ENCODE measurements at regions of chr19 and their contacts with region 1.

Region 1: GRCh38 chr19:45439569-45440254 is 16.0 kb upstream of the ERCC1 start:
- DNase-seq: peak; percentile 65
- H3K4me3 ChIP-seq: peak overlapping the region; percentile 48 to 64 (median 52)
- H3K27ac ChIP-seq: peak overlapping the region; percentile 59
- H3K4me1 ChIP-seq: peaks cover 15% of the 10 kb centered on the region
- H3K27me3 ChIP-seq: no peaks in the 10 kb centered on the region
- CTCF ChIP-seq: peak; percentile 88 to 99
- POLR2A ChIP-seq: no peak

Region 2: GRCh38 chr19:45340232-45340898 is 99.3 kb before region 1 on chr19 and contains the start of gene KLC3:
- CTCF ChIA-PET with region 1: no interaction called
- POLR2A ChIA-PET with region 1: no interaction called
- dilution Hi-C with region 1: no loop called
- intact Hi-C with region 1: no loop called
- DNase-seq: no peak
- H3K4me3 ChIP-seq: no peak within 1 kb of the TSS
- H3K27ac ChIP-seq: no peak within 1 kb of the TSS
- H3K4me1 ChIP-seq: peaks cover 5% of the 10 kb centered on the region
- H3K27me3 ChIP-seq: peaks cover 5% of the 10 kb centered on the region in 2 experiments
- CTCF ChIP-seq: no peak
- POLR2A ChIP-seq: no peak
- total RNA-seq, gene KLC3: not detected in 2 replicates

Region 3: DNA sequence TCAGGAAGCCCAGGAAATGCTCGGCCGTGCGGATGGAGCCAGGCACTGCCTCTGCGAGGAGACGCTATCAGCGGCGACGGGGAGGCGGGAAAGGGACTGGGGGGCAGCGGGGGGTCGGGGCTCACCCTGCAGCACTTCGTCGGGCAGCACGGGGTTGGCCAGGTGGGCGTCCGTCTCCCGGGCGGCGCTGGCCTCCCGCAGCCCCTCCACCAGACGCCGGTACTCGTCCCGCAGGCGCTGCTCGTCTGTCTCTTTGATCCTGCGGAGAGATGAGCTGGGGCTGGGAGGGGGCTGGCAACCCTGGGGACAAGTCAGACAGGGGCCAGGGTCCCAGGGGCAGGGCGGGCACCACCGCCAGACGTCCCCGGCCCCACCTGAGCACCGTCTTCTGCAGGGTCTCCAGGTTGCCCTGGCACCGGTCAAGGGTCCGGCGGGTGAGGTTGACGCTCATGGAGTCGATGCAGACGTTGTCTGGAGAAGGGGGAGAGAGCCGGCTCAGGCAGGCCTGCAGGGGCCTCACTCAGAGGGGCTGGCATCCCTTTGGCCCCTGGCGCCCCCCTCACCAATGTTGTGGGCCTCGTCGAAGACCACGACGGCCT is 75.8 kb before region 1 on chr19:
- CTCF ChIA-PET with region 1: no interaction called
- POLR2A ChIA-PET with region 1: no interaction called
- dilution Hi-C with region 1: no loop called
- intact Hi-C with region 1: no loop called
- DNase-seq: no peak
- H3K4me3 ChIP-seq: no peak overlapping the region
- H3K27ac ChIP-seq: no peak overlapping the region
- H3K4me1 ChIP-seq: peaks cover 1% of the 10 kb centered on the region
- H3K27me3 ChIP-seq: no peaks in the 10 kb centered on the region
- CTCF ChIP-seq: no peak
- POLR2A ChIP-seq: no peak

Region 4: DNA sequence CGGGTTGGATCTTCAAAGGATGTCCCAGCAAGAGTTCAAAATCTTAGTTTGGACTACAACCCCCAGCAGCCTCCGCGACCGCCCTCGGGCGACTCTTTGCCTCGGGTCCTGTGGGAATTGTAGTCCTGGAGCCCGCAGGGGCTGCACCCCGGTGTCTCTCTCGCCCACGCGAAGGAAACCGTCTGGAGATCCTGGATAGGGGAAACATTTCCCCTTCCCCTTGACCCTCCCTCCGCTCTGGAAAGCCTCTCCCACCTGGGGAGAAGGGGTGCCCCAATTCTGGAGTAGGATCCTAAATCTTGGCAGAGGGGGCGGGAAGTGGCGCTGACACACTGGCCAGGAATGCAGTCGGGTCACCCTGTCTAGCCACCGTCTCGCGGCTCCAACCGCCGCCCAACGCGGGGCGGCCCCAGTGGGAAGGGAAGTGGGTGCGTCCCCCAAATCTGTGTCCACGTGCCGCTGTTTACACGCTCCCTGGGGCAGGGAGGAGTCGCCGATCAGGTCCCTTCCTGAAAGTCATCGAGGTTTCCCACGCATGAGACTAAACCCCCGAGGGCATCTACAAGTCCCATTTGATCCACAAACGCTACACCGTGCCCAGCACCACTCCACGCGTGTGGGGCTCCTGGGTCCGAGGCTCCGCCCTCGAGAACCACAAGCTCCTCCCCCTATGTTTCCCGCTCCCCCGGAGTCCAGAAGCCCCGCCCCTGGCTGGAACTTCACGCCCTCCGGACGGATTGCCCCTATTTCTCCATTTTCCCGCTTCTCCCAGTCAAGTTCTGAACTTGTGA is 34.1 kb before region 1 on chr19:
- CTCF ChIA-PET with region 1: interaction called, 61 read pairs
- POLR2A ChIA-PET with region 1: no interaction called
- dilution Hi-C with region 1: no loop called
- intact Hi-C with region 1: no loop called
- DNase-seq: peak; percentile 93
- H3K4me3 ChIP-seq: peak overlapping the region; percentile 73 to 83 (median 81)
- H3K27ac ChIP-seq: peak overlapping the region; percentile 88
- H3K4me1 ChIP-seq: peaks cover 27% of the 10 kb centered on the region
- H3K27me3 ChIP-seq: no peaks in the 10 kb centered on the region
- CTCF ChIP-seq: no peak
- POLR2A ChIP-seq: peak; percentile 43

Region 5: DNA sequence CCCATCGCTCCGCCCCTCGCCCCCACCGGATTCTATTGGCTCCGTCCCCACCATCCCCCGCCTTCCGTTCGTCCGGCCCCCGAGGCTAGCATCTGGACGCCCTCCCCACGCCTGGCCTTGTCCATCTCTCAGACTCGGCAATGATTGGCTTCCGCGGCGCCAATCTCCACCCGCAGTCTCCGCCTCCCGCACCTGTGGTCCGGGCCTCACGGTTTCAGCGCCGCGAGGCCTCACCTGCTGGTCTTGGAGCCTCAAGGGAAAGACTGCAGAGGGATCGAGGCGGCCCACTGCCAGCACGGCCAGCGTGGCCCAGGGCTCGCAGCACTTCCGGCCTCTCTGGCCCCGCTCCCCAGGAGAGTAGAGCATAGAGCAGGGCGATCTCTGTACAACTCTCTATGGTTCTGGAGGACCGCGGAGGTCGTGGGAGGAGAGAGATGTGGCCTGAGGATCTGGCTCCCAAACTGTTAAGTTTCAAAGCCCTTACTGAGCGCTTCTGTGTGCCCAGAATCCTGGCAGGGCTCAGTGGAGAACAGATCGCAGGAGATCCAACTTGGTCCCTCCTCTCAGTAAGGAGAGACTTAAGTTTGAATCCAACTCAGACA is 16.0 kb before region 1 on chr19 and contains the start of gene ERCC1:
- CTCF ChIA-PET with region 1: interaction called, 22 read pairs
- POLR2A ChIA-PET with region 1: no interaction called
- dilution Hi-C with region 1: no loop called
- intact Hi-C with region 1: loop called (anchors 1 kb)
- DNase-seq: peak; percentile 94
- H3K4me3 ChIP-seq: peak within 1 kb of the TSS; percentile 59 to 74 (median 73)
- H3K27ac ChIP-seq: peak within 1 kb of the TSS; percentile 100
- H3K4me1 ChIP-seq: peaks cover 30% of the 10 kb centered on the region
- H3K27me3 ChIP-seq: no peaks in the 10 kb centered on the region
- CTCF ChIP-seq: no peak
- POLR2A ChIP-seq: peak; percentile 61
- total RNA-seq, gene ERCC1: 81.8 and 82.6 TPM in 2 replicates

Region 6: GRCh38 chr19:45455707-45456499 is 16.2 kb after region 1 on chr19:
- CTCF ChIA-PET with region 1: interaction called, 174 read pairs
- POLR2A ChIA-PET with region 1: no interaction called
- dilution Hi-C with region 1: no loop called
- intact Hi-C with region 1: loop called (anchors 1 kb)
- DNase-seq: peak; percentile 98
- H3K4me3 ChIP-seq: no peak overlapping the region
- H3K27ac ChIP-seq: peak overlapping the region; percentile 90
- H3K4me1 ChIP-seq: peaks cover 19% of the 10 kb centered on the region
- H3K27me3 ChIP-seq: no peaks in the 10 kb centered on the region
- CTCF ChIP-seq: no peak
- POLR2A ChIP-seq: no peak

Region 7: DNA sequence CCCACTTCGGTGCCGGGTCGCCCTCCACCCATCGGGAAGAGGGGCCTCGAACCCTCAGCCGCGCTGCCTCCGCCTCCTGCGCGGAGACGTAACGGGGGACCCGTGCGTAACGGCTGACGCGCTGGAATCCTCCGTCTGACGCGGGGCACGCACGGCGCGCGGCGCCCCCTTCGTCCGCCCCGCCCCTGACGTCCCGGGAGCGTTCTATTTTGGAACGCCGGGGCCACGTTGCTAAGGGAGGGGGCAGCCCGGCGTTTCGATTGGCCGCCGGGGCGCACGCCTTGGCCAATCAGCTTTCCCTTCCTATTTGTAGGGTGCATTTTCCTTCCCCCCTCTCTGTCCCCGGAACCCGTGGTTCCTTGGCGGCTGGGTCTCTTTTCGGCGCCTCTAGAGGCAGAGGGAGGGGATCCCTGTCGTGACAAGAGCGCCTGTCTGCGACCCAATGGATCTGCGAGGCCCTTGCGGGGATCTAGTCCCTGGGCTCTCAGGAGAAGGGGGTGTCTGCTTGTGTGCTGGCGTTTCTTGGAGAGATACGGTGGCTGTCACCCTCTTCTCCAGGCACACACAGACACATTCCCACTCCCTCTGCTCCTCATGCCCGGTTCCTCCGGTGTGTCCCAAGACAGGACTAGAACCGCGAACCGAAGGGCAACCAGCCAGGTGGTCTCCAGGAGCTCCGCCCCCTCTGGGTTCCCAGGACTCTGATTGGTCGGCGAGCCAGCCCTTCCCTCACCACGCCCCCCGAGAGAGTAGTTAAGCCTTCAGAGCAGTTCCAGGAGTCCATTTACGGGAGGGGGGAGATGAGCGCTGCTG is 29.6 kb after region 1 on chr19:
- CTCF ChIA-PET with region 1: interaction called, 891 read pairs
- POLR2A ChIA-PET with region 1: interaction called, 8 read pairs
- dilution Hi-C with region 1: no loop called
- intact Hi-C with region 1: loop called (anchors 1 kb)
- DNase-seq: peak; percentile 95
- H3K4me3 ChIP-seq: peak overlapping the region; percentile 45 to 71 (median 48)
- H3K27ac ChIP-seq: peak overlapping the region; percentile 86
- H3K4me1 ChIP-seq: peaks cover 18% of the 10 kb centered on the region
- H3K27me3 ChIP-seq: no peaks in the 10 kb centered on the region
- CTCF ChIP-seq: no peak
- POLR2A ChIP-seq: no peak

Region 8: GRCh38 chr19:45478454-45479238 is 38.9 kb after region 1 on chr19:
- CTCF ChIA-PET with region 1: interaction called, 891 read pairs
- POLR2A ChIA-PET with region 1: interaction called, 17 read pairs
- dilution Hi-C with region 1: no loop called
- intact Hi-C with region 1: loop called (anchors 1 kb)
- DNase-seq: peak; percentile 92
- H3K4me3 ChIP-seq: peak overlapping the region; percentile 13 to 71 (median 46)
- H3K27ac ChIP-seq: peak overlapping the region; percentile 96
- H3K4me1 ChIP-seq: peaks cover 3% of the 10 kb centered on the region
- H3K27me3 ChIP-seq: no peaks in the 10 kb centered on the region
- CTCF ChIP-seq: peak; percentile 91 to 95
- POLR2A ChIP-seq: no peak

Measured in endothelial cell of umbilical vein (primary cell).